Psoas muscle (tissue), 8 donors: ENCODE measurements at regions of chr18 and their contacts with region 1.

Region 1: DNA sequence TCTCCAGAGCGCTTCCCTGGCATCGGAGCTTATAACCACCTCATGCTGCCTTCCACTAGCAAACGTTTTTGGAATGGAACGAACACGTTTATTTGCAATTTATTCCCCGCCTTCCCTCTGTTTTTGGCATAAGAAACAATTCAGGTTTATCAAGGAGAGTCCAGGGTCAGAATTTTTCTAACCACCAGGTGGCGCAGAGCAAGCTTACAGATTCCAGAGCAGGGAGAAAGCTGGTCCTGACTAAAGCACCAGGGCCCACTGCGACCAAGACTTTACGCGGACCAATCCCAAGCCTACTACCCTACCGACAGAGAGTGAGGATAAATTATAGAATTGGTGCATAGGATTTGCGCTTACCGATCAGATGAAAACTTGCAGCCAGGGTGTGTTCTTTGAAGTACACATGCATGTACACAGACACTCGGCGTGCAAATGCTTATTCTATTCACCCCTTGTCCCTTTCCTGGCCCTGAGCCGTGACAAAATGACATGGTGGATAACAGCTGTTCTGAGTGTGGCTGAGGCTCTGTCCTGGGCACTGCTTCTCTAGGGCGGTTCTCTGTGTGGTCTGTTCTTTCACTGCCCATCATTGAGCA is 34.7 kb downstream of the NAPG start:
- DNase-seq: peak; percentile 59 to 66
- ATAC-seq: peak; percentile 64 to 89 (median 74)
- H3K4me3 ChIP-seq: peak overlapping the region; percentile 45
- H3K27ac ChIP-seq: no peak overlapping the region
- H3K4me1 ChIP-seq: peaks cover 5% of the 10 kb centered on the region
- H3K27me3 ChIP-seq: no peaks in the 10 kb centered on the region
- CTCF ChIP-seq: peak; percentile 77

Region 2: DNA sequence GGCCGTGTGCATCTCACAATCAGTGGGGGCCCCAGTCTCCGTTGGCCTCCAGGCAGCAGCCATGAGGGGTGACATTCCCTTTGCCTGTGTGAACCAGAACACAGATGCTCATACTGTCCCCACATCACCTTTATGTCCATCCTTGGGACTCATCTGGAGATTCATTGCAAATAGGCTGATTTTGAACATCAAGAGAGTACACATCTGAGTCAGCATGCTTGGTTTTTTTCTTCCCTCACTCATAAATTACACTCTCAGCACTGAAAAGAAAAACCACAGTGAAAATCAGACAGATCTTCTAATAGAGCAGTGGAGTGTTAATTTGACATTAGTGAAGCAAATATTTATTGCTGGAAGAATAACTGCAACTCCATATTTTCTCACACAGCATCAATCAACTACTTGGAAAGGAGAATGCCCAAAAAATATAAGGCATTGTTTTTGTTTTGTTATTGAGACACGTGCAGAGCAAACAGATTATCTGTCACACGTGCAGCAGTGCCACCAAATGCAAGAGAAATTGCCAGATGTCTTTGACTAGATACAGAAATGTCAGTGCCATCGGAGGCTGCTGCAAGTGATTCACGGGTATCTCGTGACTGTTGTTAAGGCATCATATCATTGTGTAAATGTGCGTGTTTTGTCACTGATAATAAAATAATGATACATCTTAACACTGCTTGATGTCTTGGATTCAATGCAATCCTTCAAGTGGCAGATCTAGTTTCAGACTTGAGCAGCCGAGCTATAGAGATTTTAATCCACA is 95.2 kb before region 1 on chr18:
- intact Hi-C with region 1: no loop called
- DNase-seq: no peak
- ATAC-seq: no peak
- H3K4me3 ChIP-seq: no peak overlapping the region
- H3K27ac ChIP-seq: no peak overlapping the region
- H3K4me1 ChIP-seq: no peaks in the 10 kb centered on the region
- H3K27me3 ChIP-seq: no peaks in the 10 kb centered on the region
- CTCF ChIP-seq: no peak

Region 3: DNA sequence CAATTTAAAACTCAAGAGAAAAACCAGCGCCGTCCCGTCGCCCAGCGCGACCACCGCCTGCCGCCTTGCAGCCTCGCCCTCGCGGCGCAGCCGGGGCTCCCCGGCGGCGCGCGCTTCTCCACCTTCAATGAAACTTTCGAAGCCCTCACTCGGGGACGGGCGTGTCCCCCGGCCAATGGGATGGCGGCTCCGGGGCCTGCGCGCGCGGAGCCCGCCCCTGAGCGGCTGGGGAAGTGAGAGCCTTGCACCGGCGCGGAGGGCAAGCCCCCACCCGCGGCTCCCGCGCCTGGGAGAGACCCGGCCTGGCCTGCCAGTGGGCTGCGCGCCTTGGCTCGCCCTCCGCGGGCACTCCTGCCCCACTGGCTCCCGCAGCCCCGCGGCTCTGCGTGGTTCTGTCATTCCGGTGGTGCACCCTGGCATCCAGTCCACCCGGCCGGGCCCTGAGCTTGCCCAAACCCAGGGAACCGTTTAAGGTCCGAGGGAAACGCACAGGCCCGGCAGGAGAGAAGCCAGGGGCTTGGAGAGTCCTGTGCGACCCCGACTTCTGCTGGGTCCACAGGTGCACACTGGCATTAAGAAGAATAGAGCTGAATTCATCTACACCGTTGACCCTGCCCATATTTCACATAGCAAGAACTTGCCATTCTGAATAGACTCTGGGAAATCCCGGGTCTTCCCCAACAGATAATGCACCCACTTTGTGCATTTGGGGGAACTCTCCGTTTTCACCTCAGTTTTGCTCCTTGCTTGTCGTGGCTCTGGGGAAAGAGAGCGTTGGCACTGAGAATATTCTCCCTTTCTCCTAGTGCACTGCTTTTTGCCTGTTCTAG is 589.1 kb after region 1 on chr18 and contains the start of gene PIEZO2:
- intact Hi-C with region 1: loop called in 1 of 2 experiments (anchors 2 kb)
- DNase-seq: peak; percentile 71 to 73
- ATAC-seq: peak; percentile 77 to 96 (median 94)
- H3K4me3 ChIP-seq: peak within 1 kb of the TSS; percentile 72
- H3K27ac ChIP-seq: no peak within 1 kb of the TSS
- H3K4me1 ChIP-seq: no peaks in the 10 kb centered on the region
- H3K27me3 ChIP-seq: peaks cover 0 to 31% (median 16%) of the 10 kb centered on the region in 3 donors
- CTCF ChIP-seq: no peak
- total RNA-seq, gene PIEZO2: 0.06 to 0.64 (median 0.17) TPM

Region 4: GRCh38 chr18:11155034-11155759 is 594.6 kb after region 1 on chr18:
- intact Hi-C with region 1: loop called (anchors 2 to 5 kb)
- DNase-seq: no peak
- ATAC-seq: no peak
- H3K4me3 ChIP-seq: no peak overlapping the region
- H3K27ac ChIP-seq: no peak overlapping the region
- H3K4me1 ChIP-seq: no peaks in the 10 kb centered on the region
- H3K27me3 ChIP-seq: peaks cover 0 to 4% (median 2%) of the 10 kb centered on the region in 3 donors
- CTCF ChIP-seq: no peak

Region 5: DNA sequence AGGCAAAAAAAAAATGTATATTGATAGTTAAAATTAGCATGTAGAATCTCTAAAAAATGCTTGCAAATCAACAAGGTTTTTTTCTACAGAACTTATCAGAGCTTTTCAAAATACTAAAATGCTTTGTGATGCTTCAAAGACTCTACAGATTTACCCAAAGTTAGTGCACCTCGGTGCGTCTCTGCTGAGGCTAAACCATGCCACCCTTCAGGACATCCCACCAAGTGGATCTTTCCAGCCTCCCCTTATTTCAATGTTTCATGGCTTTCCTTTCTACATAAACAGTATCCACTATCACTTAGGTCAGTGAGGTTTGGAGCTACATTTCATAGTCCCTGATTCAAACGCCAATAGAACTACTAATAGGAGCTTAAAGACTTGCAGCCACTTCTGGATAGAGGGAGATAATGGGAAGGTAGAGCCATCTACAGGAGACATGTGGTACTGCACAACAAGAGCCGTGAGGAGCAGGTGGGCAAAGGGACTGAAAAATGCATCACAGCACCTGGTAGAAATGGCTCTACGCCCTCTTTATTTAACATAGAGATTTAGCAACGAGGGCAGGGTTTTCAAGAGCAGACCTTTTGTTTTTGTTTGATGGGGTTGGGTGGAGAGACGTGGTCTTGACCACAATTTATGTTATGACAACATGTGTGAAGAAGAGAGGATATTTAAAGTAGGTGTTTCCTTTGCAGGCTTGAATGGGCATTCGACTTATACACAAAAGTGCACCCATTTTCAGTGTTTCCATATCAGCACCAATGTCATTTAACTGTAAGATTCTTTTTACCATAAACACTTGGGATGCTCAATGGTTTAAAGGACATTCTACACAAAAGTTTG is 992.8 kb after region 1 on chr18:
- intact Hi-C with region 1: loop called (anchors 5 to 10 kb)
- DNase-seq: no peak
- ATAC-seq: peak; percentile 71 to 83 (median 80)
- H3K4me3 ChIP-seq: no peak overlapping the region
- H3K27ac ChIP-seq: no peak overlapping the region
- H3K4me1 ChIP-seq: no peaks in the 10 kb centered on the region
- H3K27me3 ChIP-seq: peaks cover 0 to 11% (median 0%) of the 10 kb centered on the region in 3 donors
- CTCF ChIP-seq: peak; percentile 92